PC-3 (cell line): ENCODE measurements at regions of chr12 and their contacts with region 1.

Region 1: DNA sequence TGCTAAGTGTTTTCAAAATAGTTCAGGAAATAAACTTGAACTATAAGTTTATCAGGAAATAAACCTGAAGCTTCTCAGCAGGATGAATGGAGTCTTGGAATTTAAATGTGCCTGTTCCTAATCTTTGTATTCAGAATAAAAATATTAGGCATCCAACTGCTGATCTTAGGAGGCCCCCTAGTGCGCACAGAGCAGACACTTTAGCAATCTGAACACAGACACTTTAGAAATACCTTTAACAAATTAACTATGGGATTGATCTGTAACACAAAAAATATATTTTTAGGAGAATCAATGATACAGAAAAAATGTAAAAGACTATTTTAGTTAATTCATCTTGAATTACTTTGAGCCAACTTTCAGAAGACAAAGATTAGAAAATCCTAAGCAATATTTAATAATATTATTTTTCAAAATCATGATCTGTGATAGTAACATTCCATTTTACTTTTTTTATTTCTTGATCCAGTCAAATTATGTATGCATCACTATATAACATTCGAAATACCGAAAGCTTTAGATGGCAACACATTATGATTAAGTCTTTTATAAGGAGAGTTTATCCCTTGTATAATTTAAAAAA is 80.9 kb downstream of the SLC41A2 start:
- DNase-seq: peak; percentile 72
- ATAC-seq: peak; percentile 77
- H3K4me3 ChIP-seq: no peak overlapping the region
- H3K27ac ChIP-seq: no peak overlapping the region
- H3K4me1 ChIP-seq: peaks cover 7% of the 10 kb centered on the region; the same call in 1 of the 2 replicates
- H3K27me3 ChIP-seq: no peaks in the 10 kb centered on the region
- CTCF ChIP-seq: peak; percentile 96

Region 2: GRCh38 chr12:104201238-104202001 is 675.8 kb before region 1 on chr12:
- CTCF ChIA-PET with region 1: no interaction called
- POLR2A ChIA-PET with region 1: no interaction called
- intact Hi-C with region 1: loop called (anchors 2 kb)
- DNase-seq: peak; percentile 84
- ATAC-seq: peak; percentile 93
- H3K4me3 ChIP-seq: no peak overlapping the region
- H3K27ac ChIP-seq: 0 out of 2 replicates have a peak overlapping the region, but pooled peaks have one; percentile 0
- H3K4me1 ChIP-seq: peaks cover 6% of the 10 kb centered on the region; the same call in 1 of the 2 replicates
- H3K27me3 ChIP-seq: no peaks in the 10 kb centered on the region
- CTCF ChIP-seq: peak; percentile 98

Region 3: DNA sequence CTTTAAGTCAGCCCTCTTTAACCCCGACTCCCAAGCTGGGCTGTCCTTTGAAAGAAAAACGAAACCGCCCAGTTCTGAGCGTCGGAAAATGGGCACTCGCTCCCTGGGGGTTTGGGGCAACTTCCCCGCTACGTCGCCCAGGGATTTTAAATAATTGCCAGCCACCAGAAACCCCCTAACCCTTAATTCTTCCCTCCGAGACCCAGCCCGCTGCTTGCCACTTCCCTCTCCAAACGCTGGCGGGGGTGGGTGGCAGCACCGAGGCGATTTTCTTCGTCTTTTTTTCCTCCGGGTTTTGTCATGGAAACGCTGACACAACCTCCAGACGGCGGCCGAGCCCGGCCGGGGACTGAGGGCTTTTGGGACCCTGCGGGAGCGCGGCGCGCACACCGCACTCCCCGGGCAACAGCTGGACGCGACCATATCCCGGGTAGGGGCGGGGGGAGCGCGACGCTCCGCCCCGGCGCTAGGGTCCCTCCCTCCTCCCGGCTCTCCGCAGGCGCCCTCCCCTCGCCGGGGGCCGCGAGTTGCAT is 420.7 kb before region 1 on chr12 and contains the start of gene CHST11:
- CTCF ChIA-PET with region 1: no interaction called
- POLR2A ChIA-PET with region 1: no interaction called
- intact Hi-C with region 1: loop called (anchors 2 kb)
- DNase-seq: peak; percentile 85
- ATAC-seq: peak; percentile 80
- H3K4me3 ChIP-seq: peak within 1 kb of the TSS; percentile 94
- H3K27ac ChIP-seq: no peak within 1 kb of the TSS
- H3K4me1 ChIP-seq: peaks cover 39% of the 10 kb centered on the region
- H3K27me3 ChIP-seq: no peaks in the 10 kb centered on the region
- CTCF ChIP-seq: no peak; the same call in 1 of the 2 replicates
- total RNA-seq, gene CHST11: 53.5 and 56.7 TPM in 2 replicates

Region 4: GRCh38 chr12:104662203-104662602 is 215.0 kb before region 1 on chr12:
- CTCF ChIA-PET with region 1: no interaction called
- POLR2A ChIA-PET with region 1: no interaction called
- intact Hi-C with region 1: loop called (anchors 5 kb)
- DNase-seq: peak; percentile 78
- ATAC-seq: peak; percentile 66
- H3K4me3 ChIP-seq: no peak overlapping the region
- H3K27ac ChIP-seq: 0 out of 2 replicates have a peak overlapping the region, but pooled peaks have one; percentile 3
- H3K4me1 ChIP-seq: peaks cover 23% of the 10 kb centered on the region
- H3K27me3 ChIP-seq: no peaks in the 10 kb centered on the region
- CTCF ChIP-seq: no peak

Region 5: DNA sequence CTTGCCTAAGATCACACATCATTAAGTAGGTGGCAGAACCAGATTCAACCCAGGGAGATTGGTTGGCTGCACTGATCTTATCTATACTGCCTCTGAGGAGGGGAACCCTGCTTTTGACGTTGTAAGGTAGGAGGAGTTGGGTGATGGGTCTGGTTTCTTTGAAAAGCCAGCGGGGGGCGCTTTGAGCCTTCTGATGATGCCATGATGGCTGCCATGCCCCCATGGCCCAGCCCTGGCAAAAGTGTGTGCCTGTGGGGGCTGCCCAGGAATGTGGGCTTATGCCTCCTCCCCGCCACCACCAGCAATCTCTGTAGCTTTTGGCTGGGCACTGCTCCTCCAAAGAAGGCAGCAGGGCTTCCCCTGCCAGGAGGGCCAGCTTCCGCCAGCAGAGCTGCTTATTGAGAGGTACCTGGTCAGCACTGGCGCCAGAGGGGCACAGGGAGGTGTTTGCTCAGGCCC is 143.5 kb before region 1 on chr12:
- CTCF ChIA-PET with region 1: no interaction called
- POLR2A ChIA-PET with region 1: no interaction called
- intact Hi-C with region 1: loop called (anchors 1 kb)
- DNase-seq: peak; percentile 44
- ATAC-seq: peak; percentile 38; the same call in 1 of the 2 replicates
- H3K4me3 ChIP-seq: no peak overlapping the region
- H3K27ac ChIP-seq: no peak overlapping the region
- H3K4me1 ChIP-seq: no peaks in the 10 kb centered on the region
- H3K27me3 ChIP-seq: no peaks in the 10 kb centered on the region
- CTCF ChIP-seq: peak; percentile 56; the same call in 1 of the 2 replicates

Region 6: DNA sequence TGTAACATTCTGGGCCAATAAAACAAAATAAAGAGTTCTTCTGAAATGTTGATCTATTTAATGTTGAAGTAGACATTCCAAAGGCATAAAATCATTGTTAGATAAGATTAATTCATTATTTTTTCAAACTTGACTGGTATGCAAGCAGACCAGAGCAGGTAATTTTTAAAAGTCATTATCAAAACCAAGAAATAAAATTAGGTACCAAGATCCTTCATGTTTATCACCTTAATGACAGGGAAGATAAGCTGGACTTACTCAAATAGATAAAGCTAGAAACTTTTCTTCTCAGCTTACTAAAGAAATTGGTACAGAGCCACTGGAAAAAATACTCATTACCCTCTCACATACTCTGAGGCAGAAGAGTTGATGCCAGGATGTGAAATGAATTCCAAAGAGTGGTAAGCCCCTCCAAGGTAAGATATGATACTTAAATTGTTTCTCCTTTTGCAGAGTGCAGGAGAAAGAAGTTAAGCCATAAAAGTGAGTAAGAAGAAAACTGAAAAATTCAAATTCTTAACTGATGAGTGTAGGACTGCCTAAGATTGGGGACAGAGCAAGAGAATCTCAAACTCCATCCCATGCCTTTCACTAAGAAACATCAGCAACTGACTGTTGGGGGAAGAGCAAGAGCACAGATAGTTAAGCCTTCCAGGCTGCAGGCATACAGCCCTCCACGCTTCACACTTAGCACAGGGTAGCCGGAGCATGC is 31.0 kb before region 1 on chr12:
- CTCF ChIA-PET with region 1: no interaction called
- POLR2A ChIA-PET with region 1: no interaction called
- intact Hi-C with region 1: no loop called
- DNase-seq: no peak
- ATAC-seq: no peak
- H3K4me3 ChIP-seq: no peak overlapping the region
- H3K27ac ChIP-seq: no peak overlapping the region
- H3K4me1 ChIP-seq: no peaks in the 10 kb centered on the region
- H3K27me3 ChIP-seq: no peaks in the 10 kb centered on the region
- CTCF ChIP-seq: no peak

Region 7: DNA sequence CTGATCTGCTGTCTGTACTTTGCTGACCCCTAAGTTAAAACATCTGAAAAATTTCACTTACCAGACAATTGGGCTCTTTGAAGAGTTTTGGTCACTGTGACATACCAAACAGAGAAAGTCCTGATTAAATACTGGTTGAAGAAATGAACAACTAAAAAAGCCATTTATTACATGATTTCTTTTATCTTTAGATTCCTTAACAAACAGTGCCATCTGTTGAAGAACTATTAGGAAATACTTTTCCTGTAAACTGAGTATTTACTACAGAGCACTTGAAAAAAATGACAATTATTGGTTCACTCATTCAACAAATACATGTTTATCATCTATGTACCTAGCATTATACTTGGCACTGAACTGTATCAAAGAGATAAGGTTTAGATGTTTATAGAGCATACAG is 223.8 kb after region 1 on chr12:
- CTCF ChIA-PET with region 1: no interaction called
- POLR2A ChIA-PET with region 1: no interaction called
- intact Hi-C with region 1: loop called (anchors 5 kb)
- DNase-seq: peak; percentile 50
- ATAC-seq: peak; percentile 84
- H3K4me3 ChIP-seq: no peak overlapping the region
- H3K27ac ChIP-seq: no peak overlapping the region
- H3K4me1 ChIP-seq: peaks cover 10% of the 10 kb centered on the region
- H3K27me3 ChIP-seq: no peaks in the 10 kb centered on the region
- CTCF ChIP-seq: peak; percentile 63